ENCODE measurements at regions of chr9 and their contacts with region 1.

Region 1: GRCh38 chr9:78439190-78439865 is 142.4 kb downstream of the PSAT1 start:
- DNase-seq: peak; percentile 61
- ATAC-seq: peak; percentile 90
- H3K4me3 ChIP-seq: 0 out of 4 replicates have a peak overlapping the region, but pooled peaks of 1 of the 2 experiments have one; percentile 11
- H3K27ac ChIP-seq: no peak overlapping the region
- H3K4me1 ChIP-seq: no peaks in the 10 kb centered on the region
- H3K27me3 ChIP-seq: no peaks in the 10 kb centered on the region
- CTCF ChIP-seq: peak; percentile 87

Region 2: GRCh38 chr9:78428640-78429039 is 10.7 kb before region 1 on chr9:
- CTCF ChIA-PET with region 1: no interaction called
- POLR2A ChIA-PET with region 1: no interaction called
- in situ Hi-C with region 1: no loop called
- intact Hi-C with region 1: no loop called
- DNase-seq: no peak
- ATAC-seq: no peak
- H3K4me3 ChIP-seq: no peak overlapping the region
- H3K27ac ChIP-seq: no peak overlapping the region
- H3K4me1 ChIP-seq: no peaks in the 10 kb centered on the region
- H3K27me3 ChIP-seq: no peaks in the 10 kb centered on the region
- CTCF ChIP-seq: no peak

Region 3: DNA sequence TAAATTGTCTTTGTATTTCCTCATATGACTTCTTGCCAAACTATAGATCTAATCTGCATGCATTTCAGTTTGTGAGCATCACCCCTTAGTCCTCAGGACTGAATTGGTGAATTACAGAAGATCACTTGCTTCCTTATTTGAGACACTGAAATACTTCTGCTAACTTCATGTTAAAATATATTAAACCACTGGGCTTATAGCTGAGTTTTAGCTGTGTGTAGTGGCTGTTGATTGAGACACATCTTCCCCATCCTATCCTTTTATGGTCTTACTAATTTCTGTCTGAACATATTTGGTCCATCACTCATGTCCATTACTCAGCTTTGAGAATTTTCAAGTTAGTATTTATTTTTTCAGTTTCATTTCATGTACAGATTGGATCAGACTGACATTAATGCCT is 153.5 kb after region 1 on chr9:
- CTCF ChIA-PET with region 1: no interaction called
- POLR2A ChIA-PET with region 1: no interaction called
- in situ Hi-C with region 1: no loop called
- intact Hi-C with region 1: loop called (anchors 10 kb)
- DNase-seq: no peak
- ATAC-seq: no peak
- H3K4me3 ChIP-seq: no peak overlapping the region
- H3K27ac ChIP-seq: no peak overlapping the region
- H3K4me1 ChIP-seq: no peaks in the 10 kb centered on the region
- H3K27me3 ChIP-seq: no peaks in the 10 kb centered on the region
- CTCF ChIP-seq: no peak

Region 4: GRCh38 chr9:79129865-79130480 is 690.6 kb after region 1 on chr9:
- CTCF ChIA-PET with region 1: no interaction called
- POLR2A ChIA-PET with region 1: no interaction called
- in situ Hi-C with region 1: no loop called
- intact Hi-C with region 1: loop called (anchors 10 kb)
- DNase-seq: peak; percentile 2
- ATAC-seq: no peak
- H3K4me3 ChIP-seq: no peak overlapping the region
- H3K27ac ChIP-seq: no peak overlapping the region
- H3K4me1 ChIP-seq: no peaks in the 10 kb centered on the region
- H3K27me3 ChIP-seq: no peaks in the 10 kb centered on the region
- CTCF ChIP-seq: peak; percentile 82